Tibial artery (tissue), 4 donors: ENCODE measurements at regions of chr4 and their contacts with region 1.

Region 1: GRCh38 chr4:149999485-150000074 is 78.7 kb upstream of the DCLK2 start:
- DNase-seq: no peak
- H3K4me3 ChIP-seq: no peak overlapping the region
- H3K27ac ChIP-seq: no peak overlapping the region
- H3K4me1 ChIP-seq: peaks cover 0 to 16% (median 4%) of the 10 kb centered on the region in 4 donors
- H3K27me3 ChIP-seq: no peaks in the 10 kb centered on the region
- CTCF ChIP-seq: peak; percentile 67 to 83

Region 2: DNA sequence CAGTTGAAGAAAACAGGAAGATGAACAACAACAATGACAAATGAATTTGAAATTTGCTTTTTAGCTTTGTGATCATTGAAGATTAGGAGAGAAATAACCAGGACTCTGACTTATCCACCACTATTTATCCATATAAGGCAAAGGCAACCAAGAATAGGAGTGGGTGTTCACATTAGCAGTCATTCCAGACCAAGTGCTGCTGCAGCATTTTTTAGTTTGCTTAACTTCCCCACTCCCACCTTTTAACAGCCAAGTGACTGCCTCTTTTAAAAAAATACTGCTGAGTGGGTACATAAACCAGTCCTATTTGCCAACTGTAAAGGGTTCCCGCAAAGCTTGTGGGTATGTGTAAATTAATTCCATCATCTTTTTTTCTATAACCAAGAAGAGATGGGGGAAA is 414.9 kb before region 1 on chr4:
- intact Hi-C with region 1: no loop called
- DNase-seq: no peak
- H3K4me3 ChIP-seq: no peak overlapping the region
- H3K27ac ChIP-seq: no peak overlapping the region
- H3K4me1 ChIP-seq: no peaks in the 10 kb centered on the region
- H3K27me3 ChIP-seq: no peaks in the 10 kb centered on the region
- CTCF ChIP-seq: no peak

Region 3: DNA sequence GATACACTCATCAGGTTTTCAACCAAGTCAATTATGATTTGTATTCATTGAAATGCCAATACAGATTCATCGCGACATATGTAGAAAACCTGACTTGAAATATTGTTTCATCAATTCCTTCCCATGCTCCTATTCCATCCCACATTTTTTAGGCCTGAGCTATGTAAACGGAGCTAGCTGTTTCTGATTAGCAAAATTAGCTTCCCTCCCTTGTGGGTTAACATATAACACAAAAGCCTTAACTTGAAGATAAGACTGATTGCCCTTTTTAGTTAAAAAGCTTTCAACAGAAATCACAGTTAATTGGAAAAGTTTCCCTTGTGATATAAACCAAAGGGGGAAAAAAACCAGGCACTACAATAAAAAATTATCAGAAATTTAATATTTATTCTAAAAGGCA is 45.8 kb after region 1 on chr4:
- intact Hi-C with region 1: no loop called
- DNase-seq: no peak
- H3K4me3 ChIP-seq: no peak overlapping the region
- H3K27ac ChIP-seq: no peak overlapping the region
- H3K4me1 ChIP-seq: no peaks in the 10 kb centered on the region
- H3K27me3 ChIP-seq: no peaks in the 10 kb centered on the region
- CTCF ChIP-seq: no peak

Region 4: GRCh38 chr4:150217192-150217591 is 217.6 kb after region 1 on chr4:
- intact Hi-C with region 1: loop called (anchors 10 kb)
- DNase-seq: no peak
- H3K4me3 ChIP-seq: no peak overlapping the region
- H3K27ac ChIP-seq: no peak overlapping the region
- H3K4me1 ChIP-seq: peaks cover 0 to 11% (median 0%) of the 10 kb centered on the region in 4 donors
- H3K27me3 ChIP-seq: no peaks in the 10 kb centered on the region
- CTCF ChIP-seq: peak in 1 of 2 experiments; percentile 16

Region 5: DNA sequence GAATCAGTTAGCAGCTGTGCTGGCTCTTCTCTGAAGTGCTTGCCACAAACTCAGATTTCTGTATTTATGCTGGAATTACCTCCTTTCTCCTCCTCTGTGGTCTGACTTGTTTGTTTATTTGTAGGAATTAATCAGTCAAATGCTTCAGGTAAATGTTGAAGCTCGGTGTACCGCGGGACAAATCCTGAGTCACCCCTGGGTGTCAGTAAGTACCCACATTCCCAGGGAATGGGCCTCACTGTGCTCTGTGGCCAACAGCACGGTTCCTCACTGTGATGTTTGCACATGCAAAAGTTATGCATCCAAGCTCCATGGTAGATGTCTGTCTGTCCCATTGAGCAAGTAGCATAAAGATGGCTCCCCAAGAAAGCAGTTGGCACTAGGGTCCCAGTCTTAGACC is 248.6 kb after region 1 on chr4:
- intact Hi-C with region 1: loop called (anchors 5 kb)
- DNase-seq: no peak
- H3K4me3 ChIP-seq: no peak overlapping the region
- H3K27ac ChIP-seq: no peak overlapping the region
- H3K4me1 ChIP-seq: peaks cover 0 to 13% (median 2%) of the 10 kb centered on the region in 4 donors
- H3K27me3 ChIP-seq: no peaks in the 10 kb centered on the region
- CTCF ChIP-seq: no peak

Region 6: DNA sequence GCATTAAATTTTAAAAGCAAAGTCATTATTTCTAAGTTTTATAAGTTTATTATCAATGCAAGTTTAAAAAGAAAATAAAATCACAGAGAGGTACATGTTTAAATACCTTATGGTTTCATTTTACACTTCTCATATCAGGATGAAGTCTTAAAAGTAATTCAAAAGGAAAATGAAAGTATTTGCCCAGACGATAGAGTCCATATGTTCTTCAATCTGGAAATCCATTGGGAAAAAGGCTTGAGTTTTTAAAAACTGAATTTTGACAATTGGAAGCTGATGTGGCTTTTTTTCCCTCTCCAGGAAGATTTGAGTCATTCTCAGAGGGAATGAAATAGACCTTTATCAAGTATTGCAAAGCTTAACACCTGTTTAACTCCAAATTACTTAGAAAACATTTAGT is 619.5 kb after region 1 on chr4:
- intact Hi-C with region 1: no loop called
- DNase-seq: no peak
- H3K4me3 ChIP-seq: no peak overlapping the region
- H3K27ac ChIP-seq: no peak overlapping the region
- H3K4me1 ChIP-seq: no peaks in the 10 kb centered on the region
- H3K27me3 ChIP-seq: no peaks in the 10 kb centered on the region
- CTCF ChIP-seq: no peak

Region 7: DNA sequence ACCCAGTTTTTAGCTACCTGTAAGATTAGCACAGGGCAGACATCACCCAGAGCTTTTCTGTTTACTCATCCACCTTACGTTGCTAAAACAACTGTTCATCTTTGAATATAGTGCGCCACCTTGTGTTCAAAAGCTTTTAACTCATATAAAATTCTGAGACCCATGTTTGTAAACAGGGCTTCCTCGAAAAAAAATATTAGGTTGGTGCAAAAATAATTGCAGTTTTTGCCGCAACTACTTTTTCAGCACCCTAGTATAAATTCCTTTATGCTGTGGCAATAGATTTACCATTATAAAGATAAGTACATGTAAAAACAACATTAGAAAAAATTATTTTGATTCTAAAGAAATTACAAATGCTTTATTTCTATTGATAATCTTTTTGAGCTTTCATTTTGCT is 867.6 kb after region 1 on chr4:
- intact Hi-C with region 1: loop called (anchors 5 kb)
- DNase-seq: no peak
- H3K4me3 ChIP-seq: no peak overlapping the region
- H3K27ac ChIP-seq: no peak overlapping the region
- H3K4me1 ChIP-seq: no peaks in the 10 kb centered on the region
- H3K27me3 ChIP-seq: no peaks in the 10 kb centered on the region
- CTCF ChIP-seq: peak; percentile 52 to 81